ENCODE measurements at regions of chr17 and their contacts with region 1.

Region 1: GRCh38 chr17:41107941-41108450 is 2.8 kb downstream of the KRTAP4-9 start:
- DNase-seq: no peak
- ATAC-seq: no peak
- H3K4me3 ChIP-seq: no peak overlapping the region
- H3K4me3 Mint-ChIP-seq: no peak overlapping the region
- H3K27ac ChIP-seq: no peak overlapping the region
- H3K27ac Mint-ChIP-seq: no peak overlapping the region
- H3K4me1 ChIP-seq: no peaks in the 10 kb centered on the region
- H3K4me1 Mint-ChIP-seq: peaks cover 7% of the 10 kb centered on the region
- H3K27me3 ChIP-seq: no peaks in the 10 kb centered on the region
- H3K27me3 Mint-ChIP-seq: peaks cover 14% of the 10 kb centered on the region
- CTCF ChIP-seq: no peak

Region 2: DNA sequence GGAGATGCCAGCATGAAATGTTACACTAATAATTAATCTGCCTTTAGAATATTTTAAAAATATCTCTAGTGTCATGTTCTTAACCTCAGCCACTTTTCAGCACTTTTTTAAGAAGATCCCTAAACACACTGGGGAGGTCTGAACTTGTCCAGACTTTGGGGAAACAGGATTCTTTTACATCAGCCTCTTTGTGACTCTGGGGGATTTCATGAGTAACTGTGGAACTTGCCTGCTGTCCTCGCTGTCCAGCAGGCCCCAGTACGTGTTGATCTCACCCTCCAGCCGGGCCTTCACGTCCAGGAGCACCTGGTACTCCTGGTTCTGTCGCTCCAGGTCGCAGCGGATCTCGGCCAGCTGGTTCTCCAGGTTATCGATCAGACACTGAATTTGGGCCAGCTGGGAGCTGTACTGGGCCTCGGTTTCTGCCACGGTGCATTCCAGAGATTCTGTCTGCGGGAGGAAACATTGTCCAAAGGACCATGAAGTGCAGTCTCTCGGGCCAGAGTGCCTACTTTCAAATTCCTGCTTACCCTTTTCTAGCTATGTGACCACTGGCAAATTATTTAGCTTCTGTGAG is 129.3 kb before region 1 on chr17:
- CTCF ChIA-PET with region 1: no interaction called
- POLR2A ChIA-PET with region 1: no interaction called
- intact Hi-C with region 1: no loop called
- DNase-seq: no peak
- ATAC-seq: no peak
- H3K4me3 ChIP-seq: no peak overlapping the region
- H3K4me3 Mint-ChIP-seq: no peak overlapping the region
- H3K27ac ChIP-seq: no peak overlapping the region
- H3K27ac Mint-ChIP-seq: no peak overlapping the region
- H3K4me1 ChIP-seq: no peaks in the 10 kb centered on the region
- H3K4me1 Mint-ChIP-seq: no peaks in the 10 kb centered on the region
- H3K27me3 ChIP-seq: peaks cover 3 to 8% of the 10 kb centered on the region in 2 experiments
- H3K27me3 Mint-ChIP-seq: peaks cover 24% of the 10 kb centered on the region
- CTCF ChIP-seq: no peak

Region 3: DNA sequence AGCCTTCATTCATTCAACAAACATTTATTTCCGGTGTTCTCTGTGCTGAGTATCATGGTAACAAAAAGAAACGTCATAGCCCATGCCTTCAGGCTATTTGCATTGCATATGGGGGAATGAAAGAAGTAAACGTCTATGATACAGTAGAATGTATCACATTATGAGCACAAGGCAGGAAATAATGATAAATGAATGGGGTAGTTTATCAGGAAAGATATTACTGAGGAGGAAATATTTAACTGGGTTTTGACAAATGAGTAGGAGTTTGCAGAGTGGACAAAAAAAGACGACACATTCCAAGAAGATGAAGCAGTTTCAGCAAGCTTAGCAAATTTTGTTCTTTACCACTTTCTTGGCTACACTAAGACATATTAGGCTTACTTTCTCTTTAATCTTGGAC is 25.4 kb before region 1 on chr17:
- CTCF ChIA-PET with region 1: no interaction called
- POLR2A ChIA-PET with region 1: no interaction called
- intact Hi-C with region 1: loop called in 1 of 2 experiments (anchors 1 kb)
- DNase-seq: no peak
- ATAC-seq: no peak
- H3K4me3 ChIP-seq: no peak overlapping the region
- H3K4me3 Mint-ChIP-seq: no peak overlapping the region
- H3K27ac ChIP-seq: no peak overlapping the region
- H3K27ac Mint-ChIP-seq: no peak overlapping the region
- H3K4me1 ChIP-seq: no peaks in the 10 kb centered on the region
- H3K4me1 Mint-ChIP-seq: no peaks in the 10 kb centered on the region
- H3K27me3 ChIP-seq: no peaks in the 10 kb centered on the region
- H3K27me3 Mint-ChIP-seq: peaks cover 23% of the 10 kb centered on the region
- CTCF ChIP-seq: no peak

Region 4: DNA sequence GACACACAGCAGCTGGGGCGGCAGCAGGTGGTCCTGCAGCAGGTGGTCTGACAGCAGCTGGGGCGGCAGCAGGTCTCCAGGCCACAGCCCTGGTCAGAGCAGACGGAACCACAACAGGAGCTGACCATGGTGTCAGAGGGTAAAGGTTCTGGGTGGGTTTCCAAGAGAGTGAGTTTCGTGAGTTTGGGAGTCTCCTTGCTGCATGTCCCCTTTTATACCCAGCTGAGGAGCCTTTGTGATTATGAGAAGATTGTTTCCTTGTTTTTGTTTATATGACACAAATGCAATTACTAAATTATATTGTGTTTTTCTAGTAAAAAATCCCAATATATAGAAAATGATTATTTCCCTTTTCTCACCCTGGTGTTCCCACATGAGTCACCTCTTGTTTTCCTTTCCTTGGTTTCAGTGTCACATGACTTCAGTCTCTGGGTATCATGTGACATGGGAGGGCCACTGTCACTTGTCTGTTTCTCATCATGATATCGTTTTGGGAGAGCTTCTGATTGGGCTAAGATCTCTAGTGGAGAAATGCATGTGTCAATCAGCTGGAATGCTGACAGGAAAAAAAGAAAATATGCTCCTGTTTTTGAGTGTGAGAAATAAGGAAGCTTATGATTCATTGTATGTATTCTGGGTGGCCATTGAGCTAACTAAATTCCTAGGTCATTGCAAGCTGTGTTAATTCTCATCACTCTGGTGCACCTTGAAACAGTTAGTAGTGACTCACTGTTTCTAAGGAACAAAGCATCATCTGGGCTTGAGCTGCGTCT is 32.5 kb after region 1 on chr17 and contains the start of gene KRTAP4-6:
- CTCF ChIA-PET with region 1: no interaction called
- POLR2A ChIA-PET with region 1: no interaction called
- intact Hi-C with region 1: no loop called
- DNase-seq: no peak
- ATAC-seq: no peak
- H3K4me3 ChIP-seq: no peak within 1 kb of the TSS
- H3K4me3 Mint-ChIP-seq: no peak within 1 kb of the TSS
- H3K27ac ChIP-seq: no peak within 1 kb of the TSS
- H3K27ac Mint-ChIP-seq: no peak within 1 kb of the TSS
- H3K4me1 ChIP-seq: no peaks in the 10 kb centered on the region
- H3K4me1 Mint-ChIP-seq: no peaks in the 10 kb centered on the region
- H3K27me3 ChIP-seq: no peaks in the 10 kb centered on the region
- H3K27me3 Mint-ChIP-seq: no peaks in the 10 kb centered on the region
- CTCF ChIP-seq: no peak
- total RNA-seq, gene KRTAP4-6: not detected